Gastrocnemius medialis (tissue), 4 donors: ENCODE measurements at regions of chr17 and their contacts with region 1.

Region 1: DNA sequence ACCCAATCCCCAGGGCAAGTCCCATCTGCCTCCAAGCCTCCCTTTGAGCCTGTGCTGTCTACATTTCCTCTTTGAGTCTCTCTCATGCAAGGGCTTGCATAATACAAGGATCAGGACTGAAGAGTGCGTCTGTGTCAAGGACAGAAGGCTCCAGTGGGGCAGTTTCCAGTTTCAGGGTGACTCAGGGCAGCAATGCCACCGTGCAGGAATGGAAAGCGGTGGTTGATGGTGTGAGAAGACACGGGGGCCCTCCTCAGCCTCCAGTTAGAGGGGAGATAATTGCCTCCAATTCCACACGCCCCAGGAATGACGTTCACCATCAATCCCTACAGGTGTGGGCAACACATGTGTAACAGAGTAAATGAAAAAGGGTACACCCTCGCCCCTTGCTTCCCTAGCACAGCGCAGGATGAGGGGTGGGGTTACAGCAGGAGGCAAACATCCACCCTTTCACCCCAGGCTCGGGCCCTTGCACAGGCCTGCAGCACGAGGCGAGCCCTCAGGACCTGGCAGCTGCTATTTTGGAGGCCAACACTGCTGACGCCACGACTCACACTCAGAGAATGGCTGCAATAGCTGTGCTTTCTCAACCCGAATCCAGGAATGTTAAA is 24.8 kb upstream of the SLC25A19 start:
- DNase-seq: peak in 1 of 2 donors; percentile 31
- ATAC-seq: peak in 1 of 2 donors; percentile 60
- H3K4me3 ChIP-seq: no peak overlapping the region
- H3K27ac ChIP-seq: no peak overlapping the region
- H3K4me1 ChIP-seq: no peaks in the 10 kb centered on the region
- H3K27me3 ChIP-seq: no peaks in the 10 kb centered on the region
- CTCF ChIP-seq: no peak
- POLR2A ChIP-seq: no peak

Region 2: GRCh38 chr17:75524953-75525719 is 211.1 kb after region 1 on chr17 and contains the start of gene LLGL2:
- in situ Hi-C with region 1: loop called in 3 of 4 experiments (anchors 25 kb)
- intact Hi-C with region 1: no loop called
- DNase-seq: peak in 1 of 2 donors; percentile 48
- ATAC-seq: peak; percentile 79 to 84
- H3K4me3 ChIP-seq: peak within 1 kb of the TSS; percentile 64 to 95 (median 70)
- H3K27ac ChIP-seq: peak within 1 kb of the TSS; percentile 31 to 59 (median 48)
- H3K4me1 ChIP-seq: peaks cover 5 to 9% of the 10 kb centered on the region in 2 donors
- H3K27me3 ChIP-seq: peaks cover 8 to 17% (median 12%) of the 10 kb centered on the region in 3 donors
- CTCF ChIP-seq: peak in 4 of 5 experiments; percentile 41 to 63 (median 52)
- POLR2A ChIP-seq: peak in 1 of 2 donors; percentile 46
- total RNA-seq, gene LLGL2: 0.78 to 7.1 (median 1.4) TPM